A549 (cell line): ENCODE measurements at regions of chr2 and their contacts with region 1.

Region 1: DNA sequence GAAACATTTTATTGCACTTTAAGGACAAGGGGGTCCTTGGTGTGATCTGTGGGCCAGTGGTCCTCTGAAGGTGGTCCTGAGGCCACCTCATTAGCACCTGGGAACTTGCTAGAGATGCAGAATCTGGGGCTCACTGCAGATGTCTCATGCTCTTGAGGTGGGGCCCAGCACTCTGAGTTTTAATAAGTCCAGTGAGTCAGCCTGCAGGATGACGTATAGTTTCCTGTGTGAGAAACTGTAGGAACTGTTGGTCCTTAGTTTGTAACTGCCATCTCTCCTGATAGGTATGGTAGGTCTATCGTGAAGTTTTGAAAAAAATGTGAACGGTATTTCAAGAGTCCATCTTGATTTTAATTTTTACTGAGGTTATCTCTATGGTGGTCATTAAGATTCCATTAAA is 2.8 kb downstream of the TRPM8 start:
- DNase-seq: no peak
- ATAC-seq: no peak
- H3K4me3 ChIP-seq: no peak overlapping the region
- H3K27ac ChIP-seq: no peak overlapping the region
- H3K4me1 ChIP-seq: no peaks in the 10 kb centered on the region
- CTCF ChIP-seq: no peak
- EP300 ChIP-seq: no peak
- POLR2A ChIP-seq: no peak
- RAD21 ChIP-seq: no peak

Region 2: GRCh38 chr2:233674314-233674713 is 245.6 kb before region 1 on chr2:
- CTCF ChIA-PET with region 1: no interaction called
- POLR2A ChIA-PET with region 1: no interaction called
- DNase-seq: no peak
- ATAC-seq: no peak
- H3K4me3 ChIP-seq: no peak overlapping the region
- H3K27ac ChIP-seq: peak overlapping the region; percentile 82 to 85
- H3K4me1 ChIP-seq: peaks cover 23% of the 10 kb centered on the region
- CTCF ChIP-seq: no peak
- EP300 ChIP-seq: no peak
- POLR2A ChIP-seq: no peak
- RAD21 ChIP-seq: no peak

Region 3: GRCh38 chr2:233934524-233934923 is 14.6 kb after region 1 on chr2:
- CTCF ChIA-PET with region 1: interaction called, 20 read pairs
- POLR2A ChIA-PET with region 1: no interaction called
- DNase-seq: no peak
- ATAC-seq: no peak
- H3K4me3 ChIP-seq: no peak overlapping the region
- H3K27ac ChIP-seq: no peak overlapping the region
- H3K4me1 ChIP-seq: peaks cover under 1% of the 10 kb centered on the region; the same call in 2 of the 3 replicates
- CTCF ChIP-seq: no peak
- EP300 ChIP-seq: no peak
- POLR2A ChIP-seq: no peak
- RAD21 ChIP-seq: no peak